Activated B cell treated with CpG ODN at 0.5 μM for 24 hours (primary cell): ENCODE measurements at regions of chr6 and their contacts with region 1.

Region 1: GRCh38 chr6:18595774-18596530 is 208.8 kb downstream of the RNF144B start:
- DNase-seq: no peak
- ATAC-seq: peak; percentile 52
- H3K4me3 Mint-ChIP-seq: no peak overlapping the region
- H3K27ac Mint-ChIP-seq: no peak overlapping the region
- H3K4me1 Mint-ChIP-seq: peaks cover 4% of the 10 kb centered on the region
- H3K27me3 Mint-ChIP-seq: peaks cover 18% of the 10 kb centered on the region
- CTCF ChIP-seq: peak; percentile 45

Region 2: GRCh38 chr6:17212546-17213371 is 1383.2 kb before region 1 on chr6:
- CTCF ChIA-PET with region 1: no interaction called
- POLR2A ChIA-PET with region 1: no interaction called
- intact Hi-C with region 1: no loop called
- DNase-seq: no peak
- ATAC-seq: no peak
- H3K4me3 Mint-ChIP-seq: no peak overlapping the region
- H3K27ac Mint-ChIP-seq: no peak overlapping the region
- H3K4me1 Mint-ChIP-seq: no peaks in the 10 kb centered on the region
- H3K27me3 Mint-ChIP-seq: no peaks in the 10 kb centered on the region
- CTCF ChIP-seq: no peak

Region 3: DNA sequence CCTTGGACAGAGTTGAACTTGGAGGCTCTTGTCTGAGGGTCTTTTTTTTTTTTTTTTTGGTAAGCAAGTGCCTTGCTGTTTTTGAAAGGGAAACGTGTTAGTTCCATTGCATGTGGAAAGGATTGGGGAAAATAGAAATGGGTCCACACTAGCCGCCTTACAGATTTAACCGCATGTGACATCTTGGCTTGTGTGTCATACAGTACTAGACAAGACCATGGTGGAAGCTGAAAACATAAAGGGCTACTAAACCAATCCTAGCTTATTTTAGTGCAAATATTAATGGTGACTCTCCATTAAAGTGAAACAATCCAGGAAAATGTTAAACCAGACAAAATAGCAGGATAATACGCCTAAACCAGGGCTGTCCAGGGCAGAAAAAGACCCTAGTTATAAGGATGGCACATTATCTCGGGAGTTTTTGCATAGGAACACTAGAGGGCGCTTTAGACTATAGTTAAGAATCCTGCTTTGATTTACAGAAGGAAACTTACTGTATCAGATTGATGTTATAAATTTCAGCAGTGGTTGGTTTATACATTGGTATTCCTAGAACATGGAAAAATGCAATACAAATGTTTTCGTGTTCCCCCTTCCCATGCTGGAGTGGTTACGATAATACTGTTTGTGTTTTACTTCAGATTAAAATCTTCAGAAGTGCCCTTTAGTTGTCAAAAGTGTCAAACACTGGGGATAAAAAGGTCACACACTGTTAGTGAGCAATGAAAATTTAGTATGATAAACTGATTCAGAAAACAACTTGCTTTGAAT is 271.8 kb before region 1 on chr6:
- CTCF ChIA-PET with region 1: no interaction called
- POLR2A ChIA-PET with region 1: no interaction called
- intact Hi-C with region 1: loop called (anchors 1 kb)
- DNase-seq: no peak
- ATAC-seq: peak; percentile 62
- H3K4me3 Mint-ChIP-seq: no peak overlapping the region
- H3K27ac Mint-ChIP-seq: no peak overlapping the region
- H3K4me1 Mint-ChIP-seq: peaks cover 34% of the 10 kb centered on the region
- H3K27me3 Mint-ChIP-seq: no peaks in the 10 kb centered on the region
- CTCF ChIP-seq: peak; percentile 44

Region 4: DNA sequence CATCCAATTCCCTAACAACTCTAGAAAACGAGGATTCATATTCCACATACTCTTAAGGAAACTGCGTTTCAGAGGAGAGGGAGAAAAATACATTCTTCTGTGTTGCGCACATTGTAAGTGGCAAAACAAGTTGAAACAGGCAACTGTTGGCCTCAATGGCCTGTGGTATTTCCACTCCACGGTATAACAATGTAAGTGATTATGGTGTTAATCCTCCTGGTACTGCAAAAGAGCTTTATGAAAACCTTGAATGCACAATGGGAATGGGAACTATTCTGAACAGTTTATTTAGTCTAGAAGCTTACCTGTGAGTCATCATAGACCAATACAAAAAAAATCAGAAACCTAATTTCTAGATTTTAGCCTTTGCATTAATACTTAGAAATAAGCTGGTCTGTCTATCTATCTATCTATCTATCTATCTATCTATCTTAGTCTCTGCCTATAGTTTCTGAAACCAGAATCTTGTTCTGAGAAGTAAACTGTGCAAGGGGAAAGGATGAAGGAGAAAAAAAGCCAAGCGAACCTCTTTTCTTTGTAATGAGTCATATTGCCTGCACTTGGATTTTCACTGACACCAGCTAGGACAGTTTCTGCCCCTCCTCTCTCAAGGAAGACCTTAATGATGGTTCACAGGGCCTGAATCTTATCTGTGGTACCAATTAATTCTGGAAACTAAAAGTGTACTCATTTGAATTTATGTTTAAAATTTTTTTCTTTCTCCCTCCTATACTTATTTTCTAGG is 107.3 kb before region 1 on chr6:
- CTCF ChIA-PET with region 1: no interaction called
- POLR2A ChIA-PET with region 1: no interaction called
- intact Hi-C with region 1: no loop called
- DNase-seq: no peak
- ATAC-seq: no peak
- H3K4me3 Mint-ChIP-seq: no peak overlapping the region
- H3K27ac Mint-ChIP-seq: no peak overlapping the region
- H3K4me1 Mint-ChIP-seq: peaks cover 2% of the 10 kb centered on the region
- H3K27me3 Mint-ChIP-seq: no peaks in the 10 kb centered on the region
- CTCF ChIP-seq: no peak

Region 5: DNA sequence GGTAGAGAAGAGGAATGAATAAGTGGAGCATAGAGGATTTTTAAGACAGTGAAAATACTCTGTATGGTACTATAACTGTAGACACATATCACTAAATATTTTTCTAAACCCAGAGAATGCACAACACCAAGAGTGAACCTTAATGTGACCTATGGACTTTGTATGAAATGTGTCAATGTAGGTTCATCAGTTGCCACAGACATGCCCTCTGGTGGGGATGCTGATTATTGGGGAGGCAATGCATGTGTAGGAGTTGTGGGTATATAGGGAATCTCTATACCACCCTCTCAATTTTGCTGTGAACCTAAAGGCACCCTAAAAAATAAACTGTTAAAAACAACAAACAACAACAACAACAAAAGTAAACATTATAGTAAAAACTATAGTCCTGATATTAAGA is 84.9 kb after region 1 on chr6:
- CTCF ChIA-PET with region 1: no interaction called
- POLR2A ChIA-PET with region 1: no interaction called
- intact Hi-C with region 1: no loop called
- DNase-seq: no peak
- ATAC-seq: no peak
- H3K4me3 Mint-ChIP-seq: no peak overlapping the region
- H3K27ac Mint-ChIP-seq: no peak overlapping the region
- H3K4me1 Mint-ChIP-seq: no peaks in the 10 kb centered on the region
- H3K27me3 Mint-ChIP-seq: no peaks in the 10 kb centered on the region
- CTCF ChIP-seq: no peak

Region 6: DNA sequence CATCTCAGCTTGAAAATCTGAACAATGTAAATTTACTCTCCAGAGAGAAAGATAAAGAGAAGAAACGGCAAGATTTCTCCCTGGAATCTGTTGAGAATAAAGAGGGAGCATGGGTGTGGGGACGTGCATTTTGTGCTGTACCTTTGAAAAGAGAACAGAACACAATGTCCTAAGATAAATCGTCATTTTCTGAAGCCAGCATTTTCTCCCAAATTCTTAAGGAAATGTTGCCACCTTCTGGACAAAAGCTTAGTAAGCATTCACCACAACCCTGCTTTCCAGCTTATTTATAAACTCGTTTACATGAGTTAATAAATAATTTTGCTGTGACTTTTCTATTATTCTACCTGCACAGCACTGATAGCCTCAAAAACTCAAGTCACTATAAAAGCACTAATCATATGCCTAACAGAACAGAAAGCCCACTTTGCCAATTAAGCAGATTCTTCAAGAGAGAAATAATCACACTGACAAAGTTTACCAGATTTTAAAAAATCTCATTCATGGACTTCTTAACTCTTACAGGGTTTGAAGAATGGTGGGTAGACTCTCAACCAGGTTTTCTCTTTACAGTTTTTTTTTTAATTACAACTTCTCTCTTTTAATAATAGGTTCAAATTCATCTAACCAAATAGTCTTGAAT is 1460.5 kb after region 1 on chr6:
- CTCF ChIA-PET with region 1: no interaction called
- POLR2A ChIA-PET with region 1: no interaction called
- intact Hi-C with region 1: loop called (anchors 2 kb)
- DNase-seq: no peak
- ATAC-seq: no peak
- H3K4me3 Mint-ChIP-seq: no peak overlapping the region
- H3K27ac Mint-ChIP-seq: no peak overlapping the region
- H3K4me1 Mint-ChIP-seq: no peaks in the 10 kb centered on the region
- H3K27me3 Mint-ChIP-seq: no peaks in the 10 kb centered on the region
- CTCF ChIP-seq: no peak

Region 7: DNA sequence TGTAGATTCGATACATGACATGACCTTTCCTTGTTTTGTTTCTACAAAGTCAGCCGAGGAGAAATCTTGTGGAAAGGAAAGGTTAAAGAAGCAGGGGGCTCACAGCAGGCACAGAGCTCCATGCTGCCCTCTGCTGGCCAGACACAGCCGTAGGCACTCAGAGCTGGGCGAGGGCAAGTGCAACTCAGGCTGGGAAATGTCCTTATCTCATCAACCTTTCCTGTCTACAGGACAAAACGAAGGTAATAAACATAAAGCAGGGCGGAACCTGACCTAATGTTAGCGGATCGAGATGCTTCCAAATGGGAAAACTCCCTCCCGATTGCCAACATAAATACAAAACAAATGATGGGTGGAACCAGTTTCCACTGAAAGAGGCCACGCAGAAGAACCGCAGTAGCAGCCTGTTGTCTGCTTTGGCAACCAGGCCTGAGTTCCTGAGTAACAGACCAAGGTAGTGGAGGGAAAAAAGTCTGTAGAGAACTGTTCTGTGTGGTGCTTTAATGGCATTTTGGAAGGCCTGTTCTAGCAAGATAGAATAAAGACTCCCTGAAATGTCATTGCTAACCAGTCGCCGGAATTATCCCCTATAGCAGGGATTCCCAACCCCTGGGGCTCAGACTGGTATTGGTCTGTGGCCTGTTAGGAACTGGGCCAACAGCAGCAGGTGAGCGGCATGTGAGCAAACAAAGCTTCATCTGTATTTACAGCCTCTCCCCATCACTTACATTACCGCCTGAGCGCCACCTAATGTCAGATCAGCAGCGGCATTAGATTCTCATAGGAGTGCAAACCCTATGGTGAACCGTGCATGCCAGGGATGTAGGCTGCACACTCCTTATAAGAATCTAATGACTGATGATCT is 1531.1 kb after region 1 on chr6:
- CTCF ChIA-PET with region 1: interaction called, 4 read pairs
- POLR2A ChIA-PET with region 1: no interaction called
- intact Hi-C with region 1: loop called (anchors 1 kb)
- DNase-seq: peak; percentile 39
- ATAC-seq: peak; percentile 50
- H3K4me3 Mint-ChIP-seq: no peak overlapping the region
- H3K27ac Mint-ChIP-seq: no peak overlapping the region
- H3K4me1 Mint-ChIP-seq: no peaks in the 10 kb centered on the region
- H3K27me3 Mint-ChIP-seq: no peaks in the 10 kb centered on the region
- CTCF ChIP-seq: peak; percentile 95